ENCODE measurements at regions of chr6 and their contacts with region 1.

Region 1: GRCh38 chr6:24402697-24403501 is at the start of gene MRS2:
- DNase-seq: peak; percentile 65 to 81 (median 78)
- ATAC-seq: peak; percentile 96
- H3K4me3 ChIP-seq: peak within 1 kb of the TSS; percentile 97
- H3K4me3 Mint-ChIP-seq: peak within 1 kb of the TSS; percentile 92 to 99 (median 96)
- H3K27ac ChIP-seq: peak within 1 kb of the TSS; percentile 64
- H3K27ac Mint-ChIP-seq: peak within 1 kb of the TSS; percentile 58 to 96 (median 90)
- H3K4me1 ChIP-seq: peaks cover 4 to 9% of the 10 kb centered on the region in 2 donors
- H3K4me1 Mint-ChIP-seq: peaks cover 10 to 35% (median 30%) of the 10 kb centered on the region in 7 donors
- H3K27me3 ChIP-seq: no peaks in the 10 kb centered on the region
- H3K27me3 Mint-ChIP-seq: peaks cover 17 to 25% (median 23%) of the 10 kb centered on the region in 5 donors
- total RNA-seq, gene MRS2: 6.7 to 28.0 (median 23.1) TPM

Region 2: GRCh38 chr6:24117021-24117420 is 285.9 kb before region 1 on chr6:
- CTCF ChIA-PET with region 1: no interaction called
- POLR2A ChIA-PET with region 1: no interaction called
- intact Hi-C with region 1: no loop called
- DNase-seq: no peak
- ATAC-seq: no peak
- H3K4me3 ChIP-seq: no peak overlapping the region
- H3K4me3 Mint-ChIP-seq: no peak overlapping the region
- H3K27ac ChIP-seq: no peak overlapping the region
- H3K27ac Mint-ChIP-seq: no peak overlapping the region
- H3K4me1 ChIP-seq: no peaks in the 10 kb centered on the region
- H3K4me1 Mint-ChIP-seq: no peaks in the 10 kb centered on the region
- H3K27me3 ChIP-seq: no peaks in the 10 kb centered on the region
- H3K27me3 Mint-ChIP-seq: peaks cover 0 to 16% (median 9%) of the 10 kb centered on the region in 5 donors

Region 3: DNA sequence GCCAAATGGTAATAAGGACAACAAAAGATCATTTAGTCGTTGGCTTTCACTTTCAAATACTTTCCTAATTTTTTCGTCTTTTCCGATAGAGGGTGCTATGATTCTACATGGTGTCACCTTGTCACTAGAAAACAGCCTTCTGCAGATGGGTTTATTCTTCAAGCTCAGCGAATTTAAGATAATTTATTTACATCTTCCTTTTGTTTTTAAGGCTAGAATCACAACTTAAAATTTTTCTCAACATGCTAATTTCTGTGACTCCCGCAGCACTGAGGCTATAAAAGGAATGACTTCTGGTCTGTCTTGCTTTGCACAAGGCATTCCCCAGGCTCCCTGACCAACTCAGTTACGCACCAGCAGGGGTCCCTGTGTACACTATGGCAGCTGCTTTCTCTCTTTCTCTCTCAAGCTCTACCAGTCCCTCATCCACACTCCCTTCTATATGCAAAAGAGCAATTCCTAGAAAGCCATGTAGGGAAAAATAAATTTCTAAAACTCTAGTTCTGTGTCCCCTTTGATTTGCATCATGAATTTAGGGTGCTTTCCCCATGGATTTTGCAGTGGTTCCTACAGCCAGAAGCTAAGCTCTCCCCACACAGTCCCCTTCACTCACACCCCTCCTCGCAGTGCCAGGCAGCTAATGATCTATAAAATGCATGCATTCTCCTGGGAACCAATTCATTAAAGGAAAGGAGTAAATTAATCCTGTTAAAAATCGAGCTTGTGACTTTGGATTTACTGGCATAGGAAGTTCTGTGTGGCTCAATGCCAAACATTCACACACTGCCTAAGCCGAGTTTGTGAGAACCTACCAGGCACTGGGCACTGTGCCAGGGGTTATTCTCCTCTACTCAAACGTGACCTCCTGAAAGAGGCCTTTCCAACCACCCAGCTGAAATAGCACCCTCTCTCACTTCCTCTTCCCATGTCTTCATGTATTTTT is 119.6 kb before region 1 on chr6:
- CTCF ChIA-PET with region 1: no interaction called
- POLR2A ChIA-PET with region 1: no interaction called
- intact Hi-C with region 1: loop called in 1 of 2 experiments (anchors 5 kb)
- DNase-seq: peak in 6 of 9 donors; percentile 13 to 50 (median 42)
- ATAC-seq: peak; percentile 81
- H3K4me3 ChIP-seq: no peak overlapping the region
- H3K4me3 Mint-ChIP-seq: peak overlapping the region; percentile 21 to 77 (median 50)
- H3K27ac ChIP-seq: no peak overlapping the region
- H3K27ac Mint-ChIP-seq: no peak overlapping the region
- H3K4me1 ChIP-seq: no peaks in the 10 kb centered on the region
- H3K4me1 Mint-ChIP-seq: peaks cover 0 to 7% (median 6%) of the 10 kb centered on the region in 7 donors
- H3K27me3 ChIP-seq: no peaks in the 10 kb centered on the region
- H3K27me3 Mint-ChIP-seq: peaks cover 4 to 14% (median 9%) of the 10 kb centered on the region in 5 donors

Region 4: GRCh38 chr6:24359640-24360454 is 43.1 kb before region 1 on chr6:
- CTCF ChIA-PET with region 1: no interaction called
- POLR2A ChIA-PET with region 1: no interaction called
- intact Hi-C with region 1: loop called (anchors 2 kb)
- DNase-seq: peak; percentile 67 to 86 (median 81)
- ATAC-seq: peak; percentile 97
- H3K4me3 ChIP-seq: peak overlapping the region; percentile 50
- H3K4me3 Mint-ChIP-seq: peak overlapping the region; percentile 79 to 89 (median 87)
- H3K27ac ChIP-seq: peak overlapping the region; percentile 9
- H3K27ac Mint-ChIP-seq: peak overlapping the region in 8 of 9 donors; percentile 66 to 96 (median 82)
- H3K4me1 ChIP-seq: peaks cover 7 to 11% of the 10 kb centered on the region in 2 donors
- H3K4me1 Mint-ChIP-seq: peaks cover 10 to 39% (median 28%) of the 10 kb centered on the region in 7 donors
- H3K27me3 ChIP-seq: no peaks in the 10 kb centered on the region
- H3K27me3 Mint-ChIP-seq: peaks cover 0 to 57% (median 5%) of the 10 kb centered on the region in 5 donors

Region 5: DNA sequence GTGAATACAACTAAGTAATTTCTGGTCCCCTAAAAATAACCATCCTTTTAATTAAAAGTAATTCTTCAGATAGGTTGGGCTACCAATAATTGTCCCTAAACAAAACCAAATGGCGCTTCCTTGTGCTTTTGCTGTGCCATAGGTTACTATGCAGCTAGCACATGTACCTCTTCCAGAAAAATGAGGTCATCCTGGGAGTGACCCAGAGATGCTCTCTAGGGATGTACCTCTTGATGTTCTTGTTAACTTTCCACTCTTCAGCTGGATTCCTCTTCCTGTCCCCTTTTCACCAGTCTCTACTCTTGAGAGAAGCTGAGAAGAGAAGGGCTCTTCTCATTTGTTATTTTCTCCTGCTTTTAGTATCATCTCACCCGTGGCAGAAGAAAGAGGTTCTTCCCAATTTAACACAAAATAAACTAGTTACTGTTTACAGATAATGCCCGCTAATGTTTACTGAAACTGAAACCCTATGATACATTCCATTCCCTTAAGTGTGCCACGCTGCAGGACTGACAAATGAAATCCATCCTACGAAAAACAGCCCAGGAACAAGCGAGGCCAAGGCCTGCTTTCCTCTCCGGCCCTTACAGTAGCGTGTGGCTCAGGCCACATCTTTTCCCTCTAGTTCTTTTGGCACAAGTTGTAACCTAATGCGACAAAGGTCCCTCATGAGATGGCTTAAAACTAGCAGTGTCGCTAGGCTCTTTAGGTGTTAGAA is 24.0 kb after region 1 on chr6:
- CTCF ChIA-PET with region 1: no interaction called
- POLR2A ChIA-PET with region 1: no interaction called
- intact Hi-C with region 1: no loop called
- DNase-seq: no peak
- ATAC-seq: no peak
- H3K4me3 ChIP-seq: no peak overlapping the region
- H3K4me3 Mint-ChIP-seq: no peak overlapping the region
- H3K27ac ChIP-seq: no peak overlapping the region
- H3K27ac Mint-ChIP-seq: peak overlapping the region in 3 of 9 donors; percentile 5 to 16 (median 12)
- H3K4me1 ChIP-seq: no peaks in the 10 kb centered on the region
- H3K4me1 Mint-ChIP-seq: no peaks in the 10 kb centered on the region
- H3K27me3 ChIP-seq: no peaks in the 10 kb centered on the region
- H3K27me3 Mint-ChIP-seq: no peaks in the 10 kb centered on the region